Activated naive CD4-positive, alpha-beta T cell treated with anti-CD3 and anti-CD28 coated beads for 36 hours (primary cell): ENCODE measurements at regions of chr22 and their contacts with region 1.

Region 1: GRCh38 chr22:37933711-37934376 is 19.6 kb downstream of the C22orf23 start:
- DNase-seq: peak; percentile 94
- H3K4me3 Mint-ChIP-seq: no peak overlapping the region
- H3K27ac Mint-ChIP-seq: peak overlapping the region; percentile 8
- H3K4me1 Mint-ChIP-seq: peaks cover 12% of the 10 kb centered on the region
- H3K27me3 Mint-ChIP-seq: no peaks in the 10 kb centered on the region

Region 2: DNA sequence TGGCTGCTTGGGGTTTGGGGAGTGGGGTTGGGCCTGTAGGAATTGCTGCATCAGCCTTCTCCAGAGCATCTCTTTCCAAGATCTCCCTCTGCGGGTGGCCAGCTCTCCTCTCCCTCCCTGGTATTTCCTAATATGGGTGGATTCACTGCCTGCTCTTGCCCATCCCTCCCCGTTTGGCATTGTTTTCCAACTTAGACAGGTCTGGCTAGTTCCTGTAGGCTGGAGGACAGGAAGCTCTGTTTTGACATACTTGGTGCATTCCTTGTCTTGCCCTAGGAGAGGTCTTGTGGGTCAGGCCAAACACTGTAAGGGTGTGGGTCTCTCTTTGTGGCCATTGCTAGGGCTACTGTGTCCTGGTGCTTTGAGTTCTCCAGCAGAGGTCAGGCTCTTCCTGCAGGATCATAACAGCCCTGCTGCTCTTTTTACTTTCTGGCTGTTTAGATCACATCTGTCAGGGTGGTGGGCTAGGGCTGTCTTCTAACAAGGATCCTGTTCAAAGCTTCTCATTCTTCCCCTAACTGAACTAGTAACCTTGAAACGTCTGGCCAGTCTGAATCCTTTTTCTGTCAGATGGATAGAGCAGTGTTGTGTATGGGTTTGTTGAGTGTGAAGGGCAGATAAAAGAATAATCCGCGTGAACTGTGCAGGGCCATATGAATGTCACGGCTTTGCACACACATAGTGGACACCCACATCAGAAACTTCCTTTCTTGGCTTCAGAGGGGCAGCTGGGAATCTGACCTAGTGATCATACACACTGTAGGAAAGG is 46.0 kb before region 1 on chr22:
- CTCF ChIA-PET with region 1: interaction called, 4 read pairs
- intact Hi-C with region 1: loop called (anchors 2 kb)
- DNase-seq: no peak
- H3K4me3 Mint-ChIP-seq: no peak overlapping the region
- H3K27ac Mint-ChIP-seq: peak overlapping the region; percentile 5
- H3K4me1 Mint-ChIP-seq: peaks cover 6% of the 10 kb centered on the region
- H3K27me3 Mint-ChIP-seq: no peaks in the 10 kb centered on the region

Region 3: DNA sequence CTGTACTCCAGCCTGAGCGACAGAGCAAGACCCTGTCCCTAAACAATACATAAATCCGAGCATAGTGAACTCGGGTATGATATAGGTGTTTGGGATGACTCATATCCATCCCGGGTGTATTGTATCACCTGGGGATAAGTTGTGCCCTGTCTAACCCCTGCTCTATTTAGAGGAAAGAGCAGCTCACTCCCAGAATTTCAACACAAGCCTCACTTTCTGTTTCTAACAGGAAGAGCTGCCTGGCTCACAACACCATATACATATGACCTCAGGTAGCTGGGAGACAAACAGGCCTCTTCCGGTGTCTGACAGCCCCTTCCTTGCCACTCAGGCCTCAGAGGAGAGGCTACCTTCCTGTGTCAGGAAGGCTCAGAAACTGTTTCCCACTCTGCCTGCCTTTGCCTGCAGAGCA is 37.7 kb before region 1 on chr22:
- CTCF ChIA-PET with region 1: interaction called, 13 read pairs
- intact Hi-C with region 1: no loop called
- DNase-seq: peak; percentile 79
- H3K4me3 Mint-ChIP-seq: no peak overlapping the region
- H3K27ac Mint-ChIP-seq: peak overlapping the region; percentile 88
- H3K4me1 Mint-ChIP-seq: peaks cover 23% of the 10 kb centered on the region
- H3K27me3 Mint-ChIP-seq: no peaks in the 10 kb centered on the region

Region 4: GRCh38 chr22:37905534-37906363 is 28.1 kb before region 1 on chr22 and contains the start of gene MICALL1:
- CTCF ChIA-PET with region 1: interaction called, 10 read pairs
- intact Hi-C with region 1: loop called (anchors 1 kb)
- DNase-seq: peak; percentile 71
- H3K4me3 Mint-ChIP-seq: peak within 1 kb of the TSS; percentile 73
- H3K27ac Mint-ChIP-seq: peak within 1 kb of the TSS; percentile 70
- H3K4me1 Mint-ChIP-seq: peaks cover 29% of the 10 kb centered on the region
- H3K27me3 Mint-ChIP-seq: no peaks in the 10 kb centered on the region
- total RNA-seq, gene MICALL1: 12.0 to 12.9 TPM

Region 5: DNA sequence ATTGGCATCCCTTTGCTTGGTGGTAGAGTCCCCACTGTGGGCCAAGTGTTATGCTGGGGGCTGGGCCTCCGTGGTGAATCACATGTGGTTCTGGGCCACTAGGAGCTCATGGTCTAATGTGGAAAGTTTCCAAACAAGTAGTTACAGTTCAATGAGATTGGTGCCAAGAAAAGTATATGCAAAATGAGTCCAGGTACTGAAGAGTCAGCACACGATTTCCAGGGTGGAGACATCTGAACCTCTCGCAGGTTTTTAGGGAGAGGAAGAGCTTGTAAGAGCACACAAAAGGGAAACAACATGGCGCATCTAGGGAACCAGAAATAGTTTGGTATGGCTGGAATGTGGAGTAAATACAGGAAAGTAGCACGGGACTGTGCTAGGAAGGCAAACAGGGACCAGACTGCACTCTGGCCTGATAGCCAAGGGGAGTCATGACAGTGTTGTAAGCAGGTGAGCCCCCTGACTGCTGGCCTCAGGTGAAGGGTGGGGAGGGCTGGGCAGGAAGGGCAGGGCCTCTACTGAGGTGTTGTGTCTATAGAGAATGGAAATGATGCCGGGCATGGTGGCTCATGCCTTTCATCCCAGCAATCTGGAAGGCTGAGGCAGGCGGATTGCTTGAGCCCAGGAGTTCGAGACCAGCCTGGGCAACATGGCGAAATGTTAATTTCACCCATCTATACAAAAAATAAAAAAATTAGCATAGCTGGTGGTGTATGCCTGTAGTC is 32.3 kb after region 1 on chr22:
- CTCF ChIA-PET with region 1: interaction called, 4 read pairs
- intact Hi-C with region 1: loop called (anchors 1 kb)
- DNase-seq: no peak
- H3K4me3 Mint-ChIP-seq: no peak overlapping the region
- H3K27ac Mint-ChIP-seq: no peak overlapping the region
- H3K4me1 Mint-ChIP-seq: no peaks in the 10 kb centered on the region
- H3K27me3 Mint-ChIP-seq: no peaks in the 10 kb centered on the region